HEK293 (cell line): ENCODE measurements at regions of chr5 and their contacts with region 1.

Region 1: DNA sequence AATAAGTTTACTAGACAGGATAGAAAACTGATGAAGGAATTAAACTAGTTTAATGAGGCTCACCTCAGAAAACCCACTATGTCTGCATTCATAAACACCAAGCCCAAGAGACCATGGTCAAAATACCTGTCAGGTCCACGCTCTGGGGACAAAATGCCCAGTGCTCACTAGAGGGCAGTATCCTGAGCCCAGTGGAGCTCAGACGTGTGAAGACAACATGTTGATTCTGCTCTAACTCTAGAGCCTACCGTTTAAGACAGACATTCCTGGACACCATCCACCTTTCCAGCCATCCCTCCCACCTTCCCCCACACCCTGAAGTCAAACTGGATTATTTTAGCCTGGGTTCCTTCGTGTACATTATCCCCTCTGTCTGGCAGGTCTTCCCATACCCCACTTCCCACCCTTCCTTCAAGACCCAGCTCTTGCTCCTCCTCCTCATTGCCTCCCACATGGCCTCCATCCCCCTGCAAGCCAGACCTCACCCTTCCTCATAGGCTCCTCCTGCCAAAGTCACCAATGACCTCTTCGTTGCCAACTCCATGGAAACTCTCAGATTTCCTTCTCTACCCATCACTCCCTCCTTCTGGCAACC is 142.3 kb upstream of the FSTL4 start:
- H3K4me3 ChIP-seq: no peak overlapping the region
- H3K27ac ChIP-seq: no peak overlapping the region
- H3K4me1 ChIP-seq: no peaks in the 10 kb centered on the region
- CTCF ChIP-seq: peak; percentile 59

Region 2: DNA sequence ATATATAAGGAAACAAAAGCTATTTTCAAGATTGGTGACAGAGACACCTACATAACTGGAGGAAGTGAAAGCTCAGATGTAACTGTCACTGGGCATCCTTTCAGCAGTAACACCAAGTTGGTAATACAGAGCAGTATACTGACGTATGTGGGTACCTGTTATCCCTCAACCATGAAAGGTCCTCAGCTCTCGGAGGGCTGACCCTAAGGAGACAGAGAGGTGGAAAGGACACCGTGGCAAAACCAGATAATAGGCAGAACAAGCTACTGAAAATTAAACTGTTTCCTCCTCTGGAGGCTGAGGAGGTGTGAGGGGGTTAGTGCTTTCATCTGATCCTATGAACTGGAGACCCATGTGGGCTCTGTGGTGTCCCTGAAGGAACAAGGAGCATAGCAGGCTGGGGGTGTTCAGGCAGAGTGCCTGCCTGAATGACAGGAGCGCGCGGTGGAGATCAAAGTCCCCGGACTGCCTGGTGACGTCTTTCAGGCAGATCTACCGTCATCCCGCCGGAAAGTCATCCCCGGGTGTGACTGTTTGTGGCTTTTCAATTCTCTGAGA is 12.2 kb before region 1 on chr5:
- CTCF ChIA-PET with region 1: interaction called, 11 read pairs
- POLR2A ChIA-PET with region 1: no interaction called
- H3K4me3 ChIP-seq: no peak overlapping the region
- H3K27ac ChIP-seq: no peak overlapping the region
- H3K4me1 ChIP-seq: no peaks in the 10 kb centered on the region
- CTCF ChIP-seq: no peak

Region 3: GRCh38 chr5:133868946-133869518 is 114.4 kb after region 1 on chr5:
- CTCF ChIA-PET with region 1: interaction called, 31 read pairs
- POLR2A ChIA-PET with region 1: no interaction called
- H3K4me3 ChIP-seq: no peak overlapping the region
- H3K27ac ChIP-seq: no peak overlapping the region
- H3K4me1 ChIP-seq: no peaks in the 10 kb centered on the region; the same call in 1 of the 2 replicates
- CTCF ChIP-seq: peak; percentile 66

Region 4: GRCh38 chr5:133944263-133945185 is 189.9 kb after region 1 on chr5:
- CTCF ChIA-PET with region 1: interaction called, 14 read pairs
- POLR2A ChIA-PET with region 1: no interaction called
- H3K4me3 ChIP-seq: no peak overlapping the region
- H3K27ac ChIP-seq: no peak overlapping the region
- H3K4me1 ChIP-seq: no peaks in the 10 kb centered on the region
- CTCF ChIP-seq: peak; percentile 65; the same call in 1 of the 2 replicates